ENCODE measurements at regions of chr1 and their contacts with region 1.

Region 1: DNA sequence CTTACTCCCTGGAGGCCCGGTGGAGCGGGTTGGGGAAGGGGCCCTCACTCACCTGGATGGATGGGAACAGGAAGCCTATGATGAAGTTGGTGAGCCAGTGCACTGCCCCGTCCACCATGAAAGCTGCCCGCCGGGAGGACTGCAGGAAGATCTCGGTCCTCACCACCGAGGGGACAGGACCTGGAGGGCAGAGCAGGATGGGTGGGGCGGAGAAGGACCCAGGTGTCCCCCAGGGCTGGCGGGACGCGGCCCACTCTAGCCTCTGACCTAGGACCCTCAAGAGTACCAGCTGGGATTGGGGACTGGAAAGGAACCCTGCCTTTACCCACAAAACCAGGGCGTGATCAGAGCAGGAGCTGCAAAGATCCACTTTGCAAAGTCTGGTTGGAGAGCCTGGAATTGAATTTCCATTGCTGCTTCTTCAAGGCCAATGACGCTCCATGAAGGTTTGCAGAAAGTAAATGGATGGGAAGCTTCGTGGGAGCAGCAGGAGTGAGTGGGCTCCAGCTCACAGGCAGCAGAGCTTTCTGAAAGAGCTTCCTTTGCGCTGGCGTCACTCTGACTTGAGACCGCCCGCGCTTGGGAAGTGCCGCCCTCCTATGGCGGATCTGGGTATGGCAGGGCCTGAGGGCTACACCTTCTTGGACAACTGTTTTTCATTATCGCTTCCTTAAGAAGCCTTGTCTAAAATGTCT is 21.4 kb downstream of the SLC2A7 start:
- DNase-seq: peak; percentile 91
- ATAC-seq: peak; percentile 95
- H3K4me3 Mint-ChIP-seq: no peak overlapping the region
- H3K27ac Mint-ChIP-seq: no peak overlapping the region
- H3K4me1 Mint-ChIP-seq: no peaks in the 10 kb centered on the region
- H3K27me3 Mint-ChIP-seq: no peaks in the 10 kb centered on the region

Region 2: DNA sequence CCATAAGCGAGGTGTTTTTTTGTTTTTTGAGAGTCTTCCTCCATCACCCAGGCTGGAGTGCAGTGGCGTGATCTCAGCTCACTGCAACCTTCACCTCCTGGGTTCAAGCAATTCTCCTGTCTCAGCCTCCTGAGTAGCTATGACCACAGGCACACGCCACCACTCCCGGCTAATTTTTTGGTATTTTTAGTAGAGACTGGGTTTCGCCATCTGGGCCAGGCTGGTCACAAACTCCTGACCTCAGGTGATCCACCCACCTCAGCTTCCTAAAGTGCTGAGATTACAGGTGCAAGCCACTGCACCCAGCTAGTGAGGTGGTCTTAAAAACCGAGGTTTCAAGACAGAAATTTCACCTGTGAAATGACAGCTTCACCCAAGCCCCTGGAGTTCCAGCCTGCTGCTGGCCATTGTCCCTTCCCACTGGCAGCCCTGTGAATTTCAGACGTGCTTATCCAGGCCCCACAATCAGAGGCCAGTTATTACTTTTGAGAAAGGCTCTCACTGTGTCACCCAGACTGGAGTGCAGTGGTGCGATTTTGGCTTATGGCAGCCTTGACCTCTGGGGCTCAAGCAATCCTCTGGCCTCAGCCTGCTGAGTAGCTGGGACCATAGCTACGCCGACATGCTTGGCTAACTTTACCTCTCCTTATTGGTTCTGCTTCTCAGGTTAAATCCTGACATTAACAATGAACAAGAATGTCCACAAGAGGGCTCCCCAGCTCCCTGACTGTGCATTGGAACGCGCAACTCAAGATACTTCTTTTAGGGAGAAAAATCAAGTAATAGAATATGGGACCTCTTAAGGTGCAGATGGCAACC is 145.8 kb before region 1 on chr1:
- CTCF ChIA-PET with region 1: interaction called, 15 read pairs
- POLR2A ChIA-PET with region 1: interaction called, 3 read pairs
- intact Hi-C with region 1: loop called in 1 of 2 experiments (anchors 1 kb)
- DNase-seq: peak; percentile 67
- ATAC-seq: peak; percentile 55
- H3K4me3 Mint-ChIP-seq: peak overlapping the region; percentile 15
- H3K27ac Mint-ChIP-seq: peak overlapping the region; percentile 71
- H3K4me1 Mint-ChIP-seq: peaks cover 31% of the 10 kb centered on the region
- H3K27me3 Mint-ChIP-seq: no peaks in the 10 kb centered on the region

Region 3: GRCh38 chr1:8941906-8942305 is 62.9 kb before region 1 on chr1:
- CTCF ChIA-PET with region 1: interaction called, 11 read pairs
- POLR2A ChIA-PET with region 1: no interaction called
- intact Hi-C with region 1: no loop called
- DNase-seq: no peak
- ATAC-seq: peak; percentile 81
- H3K4me3 Mint-ChIP-seq: no peak overlapping the region
- H3K27ac Mint-ChIP-seq: no peak overlapping the region
- H3K4me1 Mint-ChIP-seq: peaks cover 37% of the 10 kb centered on the region
- H3K27me3 Mint-ChIP-seq: no peaks in the 10 kb centered on the region

Region 4: DNA sequence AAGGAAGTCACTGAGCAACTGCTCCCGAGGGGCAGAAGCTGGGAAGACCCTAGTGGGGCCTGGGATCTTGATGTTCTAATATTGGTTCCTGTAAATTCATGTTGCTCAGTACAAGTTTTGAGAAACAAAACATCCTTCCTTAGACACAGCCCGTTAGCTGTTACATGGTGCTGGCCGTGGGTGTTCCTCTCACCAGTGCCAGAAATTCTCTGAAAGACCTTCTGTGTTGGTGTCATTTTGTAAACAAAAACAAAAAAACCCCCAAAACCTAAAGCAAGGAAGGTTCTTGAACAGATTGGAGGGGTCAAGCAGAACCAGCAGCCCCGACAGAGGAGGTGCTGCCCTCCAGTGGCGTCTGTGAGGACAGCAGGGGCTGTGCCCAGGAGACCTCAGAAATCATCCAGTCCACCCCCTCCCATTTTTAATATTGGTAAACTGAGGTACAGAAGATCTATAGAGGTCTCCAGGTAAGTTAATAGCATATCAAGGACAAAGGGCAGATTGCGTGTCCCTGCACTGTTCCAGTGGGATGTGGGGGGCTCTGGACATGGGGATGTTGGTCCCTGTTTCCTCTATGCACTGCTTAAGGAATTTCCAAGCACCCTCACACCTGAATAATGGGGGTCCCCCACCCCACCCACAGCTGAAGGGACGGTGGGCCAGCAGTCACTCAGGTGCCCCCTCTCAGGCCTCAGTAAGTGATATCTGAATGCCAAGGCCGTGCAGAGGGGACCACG is 16.8 kb before region 1 on chr1:
- CTCF ChIA-PET with region 1: interaction called, 28 read pairs
- POLR2A ChIA-PET with region 1: interaction called, 4 read pairs
- intact Hi-C with region 1: no loop called
- DNase-seq: peak; percentile 82
- ATAC-seq: peak; percentile 77
- H3K4me3 Mint-ChIP-seq: no peak overlapping the region
- H3K27ac Mint-ChIP-seq: peak overlapping the region; percentile 65
- H3K4me1 Mint-ChIP-seq: peaks cover 18% of the 10 kb centered on the region
- H3K27me3 Mint-ChIP-seq: no peaks in the 10 kb centered on the region

Region 5: GRCh38 chr1:9101510-9102146 is 96.8 kb after region 1 on chr1:
- CTCF ChIA-PET with region 1: interaction called, 13 read pairs
- POLR2A ChIA-PET with region 1: no interaction called
- intact Hi-C with region 1: loop called in 1 of 2 experiments (anchors 2 kb)
- DNase-seq: peak; percentile 53
- ATAC-seq: peak; percentile 68
- H3K4me3 Mint-ChIP-seq: no peak overlapping the region
- H3K27ac Mint-ChIP-seq: no peak overlapping the region
- H3K4me1 Mint-ChIP-seq: no peaks in the 10 kb centered on the region
- H3K27me3 Mint-ChIP-seq: no peaks in the 10 kb centered on the region